ENCODE measurements at regions of chr2 and their contacts with region 1.

Region 1: DNA sequence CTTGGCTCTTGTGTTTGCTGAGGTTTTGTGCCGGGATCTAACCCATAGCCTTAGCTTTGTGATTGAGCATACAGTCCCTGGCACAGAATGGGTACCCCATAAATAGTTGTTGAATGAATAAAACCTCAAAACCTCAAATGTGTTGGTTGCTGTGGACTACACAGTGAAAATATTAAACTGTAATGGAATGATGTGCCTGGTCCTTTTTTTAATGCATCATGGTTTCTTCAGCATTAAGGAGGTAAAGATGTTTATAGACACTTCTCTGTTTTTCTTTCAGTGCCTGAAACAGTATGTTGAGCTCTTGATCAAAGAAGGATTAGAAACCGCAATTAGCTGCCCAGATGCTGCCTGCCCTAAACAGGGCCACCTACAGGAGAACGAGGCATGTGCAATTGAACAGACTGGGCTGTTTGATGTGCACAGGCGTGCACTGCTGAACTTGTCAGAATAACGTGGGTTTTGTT is 97.0 kb downstream of the RNF144A start:
- DNase-seq: no peak
- ATAC-seq: no peak
- H3K4me3 ChIP-seq: no peak overlapping the region
- H3K27ac ChIP-seq: peak overlapping the region in 3 of 10 donors; percentile 0 to 71 (median 28)
- H3K4me1 ChIP-seq: peaks cover 23 to 99% (median 87%) of the 10 kb centered on the region in 9 donors
- H3K27me3 ChIP-seq: no peaks in the 10 kb centered on the region
- CTCF ChIP-seq: peak in 7 of 9 donors; percentile 30 to 57 (median 39)

Region 2: GRCh38 chr2:6877402-6878304 is 136.6 kb before region 1 on chr2 and contains the start of gene RSAD2:
- intact Hi-C with region 1: no loop called
- DNase-seq: peak in 1 of 2 donors; percentile 61
- ATAC-seq: peak; percentile 59 to 92 (median 82)
- H3K4me3 ChIP-seq: peak within 1 kb of the TSS; percentile 26 to 65 (median 57)
- H3K27ac ChIP-seq: peak within 1 kb of the TSS; percentile 5 to 83 (median 74)
- H3K4me1 ChIP-seq: peaks cover 0 to 50% (median 19%) of the 10 kb centered on the region in 9 donors
- H3K27me3 ChIP-seq: no peaks in the 10 kb centered on the region
- CTCF ChIP-seq: peak in 1 of 9 donors; percentile 22
- total RNA-seq, gene RSAD2: 3.9 to 16.1 (median 6.0) TPM

Region 3: GRCh38 chr2:6986301-6987176 is 27.7 kb before region 1 on chr2:
- intact Hi-C with region 1: loop called in 1 of 10 experiments (anchors 5 kb)
- DNase-seq: no peak
- ATAC-seq: peak in 7 of 8 donors; percentile 10 to 61 (median 37)
- H3K4me3 ChIP-seq: no peak overlapping the region
- H3K27ac ChIP-seq: peak overlapping the region in 9 of 10 donors; percentile 37 to 75 (median 59)
- H3K4me1 ChIP-seq: peaks cover 17 to 67% (median 43%) of the 10 kb centered on the region in 9 donors
- H3K27me3 ChIP-seq: no peaks in the 10 kb centered on the region
- CTCF ChIP-seq: no peak

Region 4: DNA sequence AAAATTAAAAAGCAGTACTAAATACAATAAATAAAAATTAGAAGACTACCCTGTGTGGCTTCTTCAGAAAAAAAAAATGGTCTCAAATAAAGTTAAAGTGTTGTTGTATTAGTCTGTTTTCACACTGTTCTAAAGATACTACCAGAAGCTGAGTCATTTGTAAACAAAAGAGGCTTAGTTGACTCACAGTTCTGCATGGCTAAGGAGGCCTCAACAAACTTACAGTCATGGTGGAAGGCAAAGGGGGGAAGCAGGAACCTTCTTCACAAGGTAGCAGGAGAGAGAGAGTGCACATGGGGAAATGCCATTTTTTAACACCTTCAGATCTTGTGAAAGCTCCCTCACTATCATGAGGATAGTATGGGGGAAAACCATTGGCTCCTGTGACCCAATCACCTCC is 515.8 kb after region 1 on chr2:
- intact Hi-C with region 1: no loop called
- DNase-seq: no peak
- ATAC-seq: no peak
- H3K4me3 ChIP-seq: no peak overlapping the region
- H3K27ac ChIP-seq: no peak overlapping the region
- H3K4me1 ChIP-seq: no peaks in the 10 kb centered on the region
- H3K27me3 ChIP-seq: no peaks in the 10 kb centered on the region
- CTCF ChIP-seq: no peak